PC-9 (cell line): ENCODE measurements at regions of chr17 and their contacts with region 1.

Region 1: GRCh38 chr17:47821424-47822391 is at the start of gene OSBPL7:
- DNase-seq: peak; percentile 81 to 90
- H3K4me3 ChIP-seq: peak within 1 kb of the TSS; percentile 90
- H3K27ac ChIP-seq: peak within 1 kb of the TSS; percentile 79
- H3K4me1 ChIP-seq: peaks cover 30% of the 10 kb centered on the region
- H3K27me3 ChIP-seq: no peaks in the 10 kb centered on the region
- CTCF ChIP-seq: no peak; the same call in 1 of the 2 replicates
- total RNA-seq, gene OSBPL7: 32.2 and 35.9 TPM in 2 replicates

Region 2: DNA sequence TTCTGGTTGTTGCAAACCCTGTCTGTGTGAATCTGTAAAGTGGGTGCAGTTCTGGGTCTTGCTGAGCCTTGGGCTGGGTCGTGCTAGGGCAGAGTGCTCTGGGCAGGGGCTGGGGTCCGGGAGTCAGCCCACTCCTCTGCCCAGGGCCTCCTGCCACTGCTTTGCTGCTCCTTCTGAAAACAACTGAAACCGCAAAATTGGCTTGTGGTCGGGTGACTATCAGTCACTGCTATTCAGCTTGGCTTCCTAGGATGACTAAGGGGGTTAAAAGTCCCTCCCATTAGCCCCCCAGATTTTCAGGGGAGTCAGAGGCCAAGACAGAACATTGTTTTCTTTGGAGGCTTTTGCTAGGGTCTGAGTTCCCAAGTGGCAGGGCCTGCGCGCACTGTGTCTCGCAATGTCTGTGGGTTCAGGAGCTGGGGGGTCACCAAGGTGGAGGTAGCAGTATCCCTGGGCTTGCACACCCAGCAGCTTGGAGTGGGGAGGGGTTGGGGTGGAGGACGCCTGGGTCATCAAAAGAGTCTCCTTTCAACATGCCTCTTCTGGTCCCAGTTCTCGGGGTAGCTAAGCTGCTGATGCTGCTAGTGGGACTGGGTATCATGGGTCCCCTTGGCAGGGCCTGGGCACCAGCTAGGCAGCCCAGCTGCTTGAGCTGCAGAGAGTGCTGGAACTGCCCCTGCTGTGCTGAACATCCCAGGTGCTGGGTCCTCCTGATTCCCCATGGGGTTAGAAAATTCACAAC is 102.1 kb before region 1 on chr17:
- CTCF ChIA-PET with region 1: no interaction called
- POLR2A ChIA-PET with region 1: interaction called, 11 read pairs
- intact Hi-C with region 1: no loop called
- DNase-seq: peak; percentile 46 to 84
- H3K4me3 ChIP-seq: no peak overlapping the region
- H3K27ac ChIP-seq: 0 out of 2 replicates have a peak overlapping the region, but pooled peaks have one; percentile 31
- H3K4me1 ChIP-seq: peaks cover 45% of the 10 kb centered on the region
- H3K27me3 ChIP-seq: peaks cover 7% of the 10 kb centered on the region
- CTCF ChIP-seq: no peak

Region 3: GRCh38 chr17:47810205-47810821 is 11.4 kb before region 1 on chr17:
- CTCF ChIA-PET with region 1: no interaction called
- POLR2A ChIA-PET with region 1: interaction called, 15 read pairs
- intact Hi-C with region 1: loop called (anchors 1 kb)
- DNase-seq: peak; percentile 93 to 99
- H3K4me3 ChIP-seq: peak overlapping the region; percentile 12; the same call in 1 of the 2 replicates
- H3K27ac ChIP-seq: peak overlapping the region; percentile 97
- H3K4me1 ChIP-seq: peaks cover 40% of the 10 kb centered on the region
- H3K27me3 ChIP-seq: no peaks in the 10 kb centered on the region
- CTCF ChIP-seq: no peak